ENCODE measurements at regions of chr3 and their contacts with region 1.

Region 1: DNA sequence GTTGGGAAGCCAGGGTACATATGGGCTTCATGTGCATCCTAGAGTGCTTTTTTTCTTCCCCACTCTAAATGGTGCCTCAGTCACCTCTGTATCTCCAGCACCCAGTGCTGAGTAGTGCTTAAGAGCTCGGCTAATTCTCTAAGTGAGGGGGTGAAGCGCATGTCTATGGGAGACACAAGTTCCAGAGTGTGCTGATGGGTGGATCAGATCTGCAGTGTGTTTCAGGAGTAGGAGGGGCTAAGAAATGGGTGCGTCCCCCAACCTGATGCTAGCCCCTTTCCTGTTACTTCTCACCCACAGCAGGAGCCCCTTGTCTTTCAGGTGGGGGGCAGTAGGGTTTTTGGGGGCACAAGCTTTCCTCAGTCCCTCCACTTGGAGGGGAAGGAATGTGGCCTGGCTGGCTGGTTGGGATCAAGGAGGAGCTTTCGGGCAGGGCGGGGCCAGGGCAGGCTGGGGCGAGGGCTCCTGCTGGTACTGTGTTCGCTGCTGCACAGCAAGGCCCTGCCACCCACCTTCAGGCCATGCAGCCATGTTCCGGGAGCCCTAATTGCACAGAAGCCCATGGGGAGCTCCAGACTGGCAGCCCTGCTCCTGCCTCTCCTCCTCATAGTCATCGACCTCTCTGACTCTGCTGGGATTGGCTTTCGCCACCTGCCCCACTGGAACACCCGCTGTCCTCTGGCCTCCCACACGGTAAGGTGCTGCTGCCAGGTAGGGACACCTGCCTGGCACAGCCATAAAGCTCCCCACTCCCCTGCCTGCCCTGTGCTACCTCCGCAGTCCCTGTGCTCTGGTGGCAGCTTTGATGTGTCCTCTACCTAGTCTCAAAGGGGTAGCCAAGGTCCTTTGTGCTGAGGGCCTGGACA is at the start of gene IL17RE:
- DNase-seq: peak in 1 of 2 donors; percentile 80
- H3K4me3 ChIP-seq: peak within 1 kb of the TSS; percentile 53 to 65
- H3K27ac ChIP-seq: peak within 1 kb of the TSS; percentile 79 to 82
- H3K4me1 ChIP-seq: peaks cover 0 to 46% (median 17%) of the 10 kb centered on the region in 4 donors
- H3K27me3 ChIP-seq: no peaks in the 10 kb centered on the region
- CTCF ChIP-seq: no peak

Region 2: GRCh38 chr3:9503283-9503682 is 399.3 kb before region 1 on chr3:
- intact Hi-C with region 1: loop called (anchors 5 kb)
- DNase-seq: peak in 1 of 2 donors; percentile 65
- H3K4me3 ChIP-seq: no peak overlapping the region
- H3K27ac ChIP-seq: no peak overlapping the region
- H3K4me1 ChIP-seq: peaks cover 0 to 12% (median 8%) of the 10 kb centered on the region in 4 donors
- H3K27me3 ChIP-seq: peaks cover 0 to 41% of the 10 kb centered on the region in 2 donors
- CTCF ChIP-seq: peak; percentile 58 to 75